ENCODE measurements at regions of chr3 and their contacts with region 1.

Region 1: DNA sequence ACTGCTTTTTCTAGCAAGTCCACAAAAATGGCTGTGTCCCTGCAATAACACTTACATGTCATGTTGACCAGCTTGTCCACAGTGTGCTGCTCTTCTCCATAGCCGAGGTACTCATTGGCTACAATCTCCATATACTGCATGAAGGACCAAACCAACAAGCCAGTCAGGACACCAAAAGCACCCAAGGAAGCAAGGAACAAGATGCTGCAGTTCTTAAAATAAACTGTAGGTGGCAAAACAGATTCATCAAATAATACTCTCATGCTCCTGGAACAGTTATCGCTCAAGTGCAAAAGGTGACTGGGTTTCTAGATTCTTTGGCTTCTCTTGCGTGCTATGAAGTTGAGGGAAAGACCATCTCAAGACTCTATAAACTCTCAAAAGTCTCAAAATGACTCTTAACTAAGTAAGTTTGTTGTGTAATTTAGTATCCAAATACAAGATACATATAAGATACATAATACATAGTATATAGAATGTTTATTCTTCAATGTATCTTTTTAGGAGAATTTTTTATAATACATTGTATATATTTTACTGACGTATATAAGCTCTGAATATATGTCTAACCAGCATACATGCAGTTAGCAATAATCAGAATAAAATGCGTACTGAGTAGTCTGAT is 57.0 kb downstream of the NEK10 start:
- DNase-seq: peak in 2 of 4 donors; percentile 45 to 59
- ATAC-seq: peak; percentile 90
- H3K4me3 ChIP-seq: no peak overlapping the region
- H3K27ac ChIP-seq: no peak overlapping the region
- H3K4me1 ChIP-seq: no peaks in the 10 kb centered on the region
- H3K27me3 ChIP-seq: no peaks in the 10 kb centered on the region
- CTCF ChIP-seq: peak; percentile 74 to 80

Region 2: GRCh38 chr3:27141668-27142067 is 170.5 kb before region 1 on chr3:
- intact Hi-C with region 1: no loop called
- DNase-seq: no peak
- ATAC-seq: no peak
- H3K4me3 ChIP-seq: no peak overlapping the region
- H3K27ac ChIP-seq: no peak overlapping the region
- H3K4me1 ChIP-seq: no peaks in the 10 kb centered on the region
- H3K27me3 ChIP-seq: no peaks in the 10 kb centered on the region
- CTCF ChIP-seq: no peak

Region 3: DNA sequence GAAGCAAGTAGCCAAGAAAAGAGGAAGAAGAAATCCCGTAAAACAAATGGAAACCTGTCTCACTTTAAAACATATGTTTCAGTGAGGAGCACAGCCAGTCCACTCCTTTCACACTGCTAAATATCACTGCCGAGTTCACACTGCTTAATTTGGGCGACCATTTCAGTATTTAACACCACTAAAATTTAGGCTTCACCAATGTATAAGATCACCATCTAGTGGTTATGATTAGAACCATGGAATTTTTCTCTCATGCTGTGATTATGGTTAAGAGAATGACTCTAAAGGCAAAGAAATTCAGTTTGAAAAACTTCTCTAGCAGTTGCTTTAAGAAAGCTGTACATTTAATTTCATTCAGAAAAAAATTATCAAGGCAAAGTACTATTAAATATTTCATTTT is 155.4 kb after region 1 on chr3:
- intact Hi-C with region 1: loop called in 1 of 2 experiments (anchors 10 kb)
- DNase-seq: peak in 2 of 4 donors; percentile 23 to 36
- ATAC-seq: peak; percentile 92
- H3K4me3 ChIP-seq: no peak overlapping the region
- H3K27ac ChIP-seq: no peak overlapping the region
- H3K4me1 ChIP-seq: peaks cover 0 to 5% of the 10 kb centered on the region in 2 donors
- H3K27me3 ChIP-seq: no peaks in the 10 kb centered on the region
- CTCF ChIP-seq: peak; percentile 29 to 41

Region 4: DNA sequence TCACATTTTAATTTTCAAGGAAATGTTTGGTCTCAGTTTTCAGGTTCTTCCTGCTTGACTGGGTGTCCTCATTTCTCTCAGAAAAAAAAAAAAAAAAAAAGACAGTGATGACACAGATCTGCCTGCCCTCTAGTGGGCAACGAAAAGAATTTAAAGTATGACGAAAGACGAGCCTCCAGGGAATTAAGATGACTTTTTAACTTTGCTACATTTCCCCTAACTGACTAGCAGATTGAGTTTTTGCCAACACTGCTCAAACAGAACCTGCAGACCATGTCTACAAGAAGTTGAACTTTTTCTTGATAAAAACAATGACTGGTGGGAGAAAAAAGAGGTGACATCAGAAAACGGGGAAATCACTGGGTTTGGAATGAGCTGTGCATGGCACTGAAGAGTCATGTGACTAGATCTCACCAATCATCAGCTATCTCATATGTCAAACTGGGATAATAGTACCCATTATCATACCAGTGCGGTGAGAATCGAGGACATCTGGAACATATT is 369.1 kb after region 1 on chr3:
- intact Hi-C with region 1: loop called in 1 of 2 experiments (anchors 10 kb)
- DNase-seq: peak in 2 of 4 donors; percentile 43 to 79
- ATAC-seq: peak; percentile 87
- H3K4me3 ChIP-seq: no peak overlapping the region
- H3K27ac ChIP-seq: no peak overlapping the region
- H3K4me1 ChIP-seq: peaks cover 0 to 10% of the 10 kb centered on the region in 2 donors
- H3K27me3 ChIP-seq: no peaks in the 10 kb centered on the region
- CTCF ChIP-seq: peak; percentile 49 to 56